Uterus (tissue), 4 donors: ENCODE measurements at regions of chr12 and their contacts with region 1.

Region 1: DNA sequence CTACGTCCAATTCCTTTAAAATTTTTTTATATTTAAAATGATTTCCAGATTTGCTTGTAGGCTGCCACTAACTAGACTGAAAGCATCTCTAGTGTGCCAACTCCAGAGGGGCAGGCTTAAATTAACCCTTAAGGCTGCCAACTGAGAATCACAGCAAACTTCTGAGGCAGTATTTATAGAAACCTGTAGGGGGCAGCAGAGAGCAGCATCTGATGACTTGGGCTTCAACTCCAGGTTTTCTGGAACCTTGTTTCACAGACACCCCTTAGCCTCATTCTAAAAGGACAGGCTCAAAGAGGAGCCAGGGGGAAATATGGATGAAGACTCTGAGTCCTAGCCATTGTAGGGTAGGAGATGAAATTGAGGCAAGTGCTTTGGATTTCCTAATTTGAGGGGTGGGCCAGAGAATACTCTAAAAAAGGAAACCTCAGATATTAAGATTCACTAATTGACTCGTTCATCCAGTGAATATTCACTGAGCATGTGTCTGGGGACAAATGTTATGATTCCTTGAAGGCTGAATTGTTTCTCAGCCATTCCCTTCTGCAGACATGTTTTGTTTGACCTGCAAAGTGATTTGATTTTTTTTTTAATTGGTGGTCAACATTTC is 63.3 kb upstream of the HSPB8 start:
- DNase-seq: peak; percentile 15 to 30
- H3K4me3 ChIP-seq: no peak overlapping the region
- H3K27ac ChIP-seq: no peak overlapping the region
- H3K4me1 ChIP-seq: no peaks in the 10 kb centered on the region
- H3K27me3 ChIP-seq: no peaks in the 10 kb centered on the region
- CTCF ChIP-seq: peak; percentile 71 to 97 (median 82)
- POLR2A ChIP-seq: no peak

Region 2: GRCh38 chr12:118680356-118680963 is 434.9 kb before region 1 on chr12:
- intact Hi-C with region 1: no loop called
- DNase-seq: no peak
- H3K4me3 ChIP-seq: no peak overlapping the region
- H3K27ac ChIP-seq: no peak overlapping the region
- H3K4me1 ChIP-seq: no peaks in the 10 kb centered on the region
- H3K27me3 ChIP-seq: no peaks in the 10 kb centered on the region
- CTCF ChIP-seq: no peak
- POLR2A ChIP-seq: no peak

Region 3: DNA sequence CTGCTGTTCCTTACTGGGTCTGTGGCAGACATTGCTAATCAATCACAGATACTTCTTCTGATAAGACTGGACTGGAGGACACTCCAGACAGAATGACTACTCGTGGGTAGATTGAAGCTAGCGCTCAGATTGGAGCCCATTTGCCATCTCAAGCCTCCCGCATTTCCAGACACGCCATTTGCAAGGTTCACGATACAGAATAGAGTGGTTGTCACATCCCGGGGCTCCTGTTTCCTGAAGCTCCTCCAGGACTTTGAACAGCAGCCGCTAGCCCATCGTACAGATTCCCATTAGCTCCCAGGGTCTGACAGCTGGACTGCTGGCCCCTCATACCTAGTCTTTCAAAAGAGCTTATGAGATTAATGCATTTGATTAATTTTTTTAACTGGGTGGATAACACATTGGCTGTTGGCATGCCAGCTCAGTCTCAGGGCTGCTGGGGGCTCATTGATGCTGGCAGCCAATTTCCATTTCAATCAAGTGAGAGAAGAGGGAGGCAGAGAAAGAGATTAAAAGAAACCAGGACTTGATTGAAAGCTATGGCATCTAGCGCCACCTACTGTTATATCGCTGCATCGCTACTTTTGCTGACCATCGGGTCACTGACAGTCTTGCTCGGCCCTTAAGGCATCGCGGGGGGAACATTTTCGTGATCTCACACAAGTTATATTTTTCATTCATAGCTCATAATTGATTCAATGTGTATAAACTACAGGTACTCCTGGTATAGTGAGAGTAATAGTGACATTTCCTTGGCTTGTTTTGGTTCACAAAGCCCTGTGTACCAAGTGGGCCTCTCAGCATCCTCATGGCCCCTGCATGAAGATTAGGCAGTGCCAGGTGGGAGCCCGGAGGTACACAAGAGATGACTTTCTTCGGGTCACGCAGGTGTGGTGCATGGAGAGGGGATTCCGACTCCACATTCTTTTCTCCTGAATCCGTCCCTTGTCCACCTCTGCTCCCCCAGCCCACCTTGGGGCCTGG is 297.7 kb after region 1 on chr12:
- intact Hi-C with region 1: loop called (anchors 5 kb)
- DNase-seq: peak; percentile 27 to 50
- H3K4me3 ChIP-seq: no peak overlapping the region
- H3K27ac ChIP-seq: no peak overlapping the region
- H3K4me1 ChIP-seq: no peaks in the 10 kb centered on the region
- H3K27me3 ChIP-seq: no peaks in the 10 kb centered on the region
- CTCF ChIP-seq: peak; percentile 72 to 79 (median 76)
- POLR2A ChIP-seq: no peak

Region 4: GRCh38 chr12:119544765-119545625 is 429.6 kb after region 1 on chr12:
- intact Hi-C with region 1: no loop called
- DNase-seq: peak; percentile 22 to 43
- H3K4me3 ChIP-seq: no peak overlapping the region
- H3K27ac ChIP-seq: no peak overlapping the region
- H3K4me1 ChIP-seq: no peaks in the 10 kb centered on the region
- H3K27me3 ChIP-seq: no peaks in the 10 kb centered on the region
- CTCF ChIP-seq: peak; percentile 51 to 72 (median 63)
- POLR2A ChIP-seq: no peak